ENCODE measurements at regions of chr10 and their contacts with region 1.

Region 1: GRCh38 chr10:6401562-6402348 is 178.3 kb downstream of the PRKCQ start:
- DNase-seq: peak; percentile 82
- CTCF ChIP-seq: peak; percentile 90

Region 2: DNA sequence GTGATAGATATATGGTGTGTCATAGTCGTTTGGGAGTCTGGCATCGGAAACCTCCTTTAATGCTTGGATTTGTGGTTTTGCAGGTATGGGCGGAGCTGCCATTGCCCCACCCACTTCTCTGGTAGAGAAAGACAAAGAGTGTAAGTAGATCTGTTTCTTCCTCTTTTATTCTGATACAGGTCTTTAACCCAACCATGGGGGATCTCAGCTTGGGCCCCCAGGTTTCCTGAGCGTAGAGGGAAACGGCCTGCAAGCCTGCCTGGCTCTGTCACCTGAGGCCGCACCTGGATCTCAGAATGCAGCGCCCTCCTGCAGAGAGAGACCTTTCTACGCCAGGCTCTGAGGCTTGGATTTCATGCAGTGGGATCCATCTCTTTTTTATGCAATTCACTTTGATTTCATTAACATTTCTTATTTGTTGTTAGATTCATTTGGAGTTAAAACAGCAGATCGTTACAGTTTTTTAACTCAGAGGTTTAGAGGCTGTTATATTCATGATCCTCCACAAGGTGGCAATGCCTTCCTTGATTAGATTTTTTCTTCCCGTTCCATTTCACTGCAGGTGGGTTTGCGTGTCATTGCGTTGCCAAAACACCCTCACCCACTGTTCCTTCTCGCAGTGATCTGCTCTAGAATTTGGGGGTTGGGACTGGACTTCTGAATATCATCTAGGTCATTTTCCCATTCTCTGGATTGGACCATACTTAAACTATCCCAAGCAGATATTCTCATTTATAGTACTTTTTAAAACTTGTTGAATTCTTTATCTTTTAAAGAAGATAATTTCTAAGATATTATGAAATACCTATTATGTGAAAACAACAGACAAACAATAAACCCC is 292.9 kb before region 1 on chr10:
- in situ Hi-C with region 1: loop called (anchors 10 kb)
- DNase-seq: peak; percentile 54
- CTCF ChIP-seq: peak; percentile 67

Region 3: GRCh38 chr10:6667679-6668270 is 266.0 kb after region 1 on chr10:
- in situ Hi-C with region 1: loop called (anchors 25 kb)
- DNase-seq: no peak
- CTCF ChIP-seq: peak; percentile 52